ENCODE measurements at regions of chr16 and their contacts with region 1.

Region 1: DNA sequence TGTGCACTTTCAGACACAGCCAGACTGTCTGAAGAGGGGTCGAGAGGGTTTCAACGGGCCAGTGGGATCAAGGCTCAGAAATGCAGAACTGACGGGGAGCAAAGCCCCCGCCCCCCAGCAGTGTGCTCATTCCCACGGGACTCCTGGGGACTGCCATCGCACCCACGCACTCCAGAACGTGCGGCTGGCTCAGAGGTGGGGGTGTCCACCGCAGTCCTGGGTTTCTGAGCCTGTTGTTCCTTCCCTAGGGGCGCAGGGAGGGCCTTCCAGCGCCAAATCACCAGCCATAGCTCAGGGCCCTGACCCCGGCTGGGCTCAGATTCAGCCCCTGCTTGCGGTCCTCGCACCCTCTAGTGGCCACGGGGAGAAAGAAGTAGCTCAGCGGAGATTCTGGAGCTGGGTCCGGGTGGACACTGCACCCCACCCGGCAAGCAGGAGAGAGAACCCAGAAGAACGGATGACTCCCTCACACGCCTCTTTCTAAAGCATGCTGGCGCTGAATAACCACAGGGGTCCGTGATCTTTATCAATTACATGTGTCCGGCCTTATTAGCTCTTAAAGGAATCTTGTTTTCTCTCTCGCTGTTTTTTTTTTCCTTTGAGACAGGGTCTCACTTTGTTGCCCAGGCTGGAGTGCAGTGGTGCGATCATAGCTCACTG is 45.0 kb upstream of the USP7 start:
- DNase-seq: peak; percentile 73 to 89 (median 86)
- ATAC-seq: peak; percentile 93
- H3K4me3 ChIP-seq: no peak overlapping the region
- H3K4me1 ChIP-seq: peaks cover 13% of the 10 kb centered on the region
- CTCF ChIP-seq: peak; percentile 89

Region 2: DNA sequence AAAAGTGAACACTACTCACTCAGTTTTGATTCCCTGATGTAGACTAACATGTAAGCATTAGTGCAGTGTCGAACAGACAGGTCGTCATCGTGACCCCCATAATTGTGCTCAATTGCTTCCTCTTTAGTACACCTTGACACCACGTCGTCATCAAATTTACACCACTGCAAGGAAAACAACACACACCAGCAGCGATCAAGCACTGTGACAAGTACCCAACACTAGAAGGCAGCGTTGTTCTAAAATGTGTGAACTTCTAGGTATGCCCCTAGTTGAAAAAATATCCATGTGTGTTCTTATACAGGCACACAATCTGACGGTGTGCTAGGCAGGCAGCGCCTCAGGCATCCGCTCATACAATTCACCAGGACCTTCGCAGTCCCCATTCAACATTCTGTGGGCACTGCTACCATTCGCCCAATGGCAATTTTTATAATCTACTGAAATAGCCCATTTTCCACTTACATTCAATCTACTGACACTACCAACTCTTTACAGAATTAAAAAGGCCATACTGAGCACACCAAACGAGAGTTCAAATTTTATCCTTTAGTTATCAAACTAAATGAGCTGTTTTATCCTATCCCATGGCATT is 103.5 kb before region 1 on chr16:
- intact Hi-C with region 1: loop called in 1 of 2 experiments (anchors 10 kb)
- DNase-seq: no peak
- ATAC-seq: peak; percentile 64
- H3K4me3 ChIP-seq: no peak overlapping the region
- H3K4me1 ChIP-seq: peaks cover 7% of the 10 kb centered on the region
- CTCF ChIP-seq: no peak

Region 3: DNA sequence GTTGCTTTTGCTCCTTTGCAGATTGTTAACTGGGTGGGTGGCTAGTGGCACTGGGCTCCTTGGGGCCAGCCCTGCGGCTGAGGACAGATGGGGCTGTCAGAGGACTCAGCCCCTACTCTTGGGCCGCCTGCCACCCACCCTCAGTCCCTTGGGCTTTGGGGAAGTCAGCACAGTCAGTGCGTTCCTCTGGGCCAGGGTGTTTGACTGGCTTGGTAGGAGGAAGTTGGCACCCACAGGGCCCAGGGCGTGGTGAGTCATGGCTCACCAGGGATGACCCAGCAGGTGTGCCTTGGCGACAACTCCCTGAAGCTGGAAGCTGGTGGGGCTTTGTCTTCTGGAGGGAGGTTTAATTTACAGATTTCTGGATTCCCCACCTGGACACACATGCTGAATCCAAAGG is 115.1 kb after region 1 on chr16:
- intact Hi-C with region 1: no loop called
- DNase-seq: peak; percentile 91 to 93 (median 92)
- ATAC-seq: peak; percentile 94
- H3K4me3 ChIP-seq: no peak overlapping the region
- H3K4me1 ChIP-seq: peaks cover 22% of the 10 kb centered on the region
- CTCF ChIP-seq: no peak

Measured in mucosa of descending colon (tissue), 3 donors.